ENCODE measurements at regions of chr3 and their contacts with region 1.

Region 1: GRCh38 chr3:72818092-72818773 is 30.0 kb downstream of the SHQ1 start:
- DNase-seq: no peak
- ATAC-seq: no peak
- H3K4me3 Mint-ChIP-seq: no peak overlapping the region
- H3K27ac Mint-ChIP-seq: no peak overlapping the region
- H3K4me1 Mint-ChIP-seq: peaks cover 14% of the 10 kb centered on the region
- H3K27me3 Mint-ChIP-seq: no peaks in the 10 kb centered on the region

Region 2: DNA sequence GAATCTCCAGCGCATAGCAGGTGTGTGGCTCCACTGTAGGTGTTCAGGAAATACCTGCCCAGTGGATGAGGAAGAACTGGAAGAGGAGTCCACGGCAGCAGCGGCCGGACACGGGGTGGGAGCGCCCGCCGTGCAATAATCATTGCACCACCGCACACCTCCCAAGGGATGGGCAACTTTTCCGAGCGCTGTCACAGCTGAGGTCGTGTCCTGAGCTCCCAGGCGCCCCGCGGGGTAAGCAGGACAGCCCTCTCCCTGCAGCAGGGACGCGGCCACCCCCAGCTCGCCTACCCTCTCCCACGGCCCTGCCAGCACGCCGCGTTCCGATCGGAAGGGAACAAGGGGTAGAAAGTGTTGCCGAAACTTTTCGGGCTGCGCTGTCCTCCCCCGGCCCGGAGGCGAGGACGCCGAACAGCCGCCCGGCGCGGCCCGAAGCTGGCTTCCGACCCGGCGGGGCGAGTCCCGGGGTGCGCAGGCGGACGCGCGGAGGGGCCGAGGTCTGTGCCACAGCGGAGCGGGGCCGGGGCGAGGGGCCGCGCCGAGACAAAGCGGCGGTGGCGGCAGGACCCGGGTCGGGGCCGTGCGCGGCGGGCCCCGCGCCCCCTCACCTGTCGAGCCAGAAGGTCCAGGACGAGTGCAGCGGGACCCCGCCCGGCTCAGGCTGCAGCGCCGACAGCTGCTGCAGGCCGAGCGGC is 1093.5 kb before region 1 on chr3:
- CTCF ChIA-PET with region 1: interaction called, 10 read pairs
- POLR2A ChIA-PET with region 1: no interaction called
- DNase-seq: peak; percentile 45
- ATAC-seq: peak; percentile 43
- H3K4me3 Mint-ChIP-seq: peak overlapping the region; percentile 94
- H3K27ac Mint-ChIP-seq: peak overlapping the region; percentile 92
- H3K4me1 Mint-ChIP-seq: peaks cover 59% of the 10 kb centered on the region
- H3K27me3 Mint-ChIP-seq: no peaks in the 10 kb centered on the region

Region 3: GRCh38 chr3:71930056-71930991 is 887.9 kb before region 1 on chr3:
- CTCF ChIA-PET with region 1: interaction called, 11 read pairs
- POLR2A ChIA-PET with region 1: no interaction called
- DNase-seq: no peak
- ATAC-seq: no peak
- H3K4me3 Mint-ChIP-seq: no peak overlapping the region
- H3K27ac Mint-ChIP-seq: no peak overlapping the region
- H3K4me1 Mint-ChIP-seq: no peaks in the 10 kb centered on the region
- H3K27me3 Mint-ChIP-seq: no peaks in the 10 kb centered on the region

Region 4: GRCh38 chr3:72665701-72666443 is 152.4 kb before region 1 on chr3:
- CTCF ChIA-PET with region 1: interaction called, 189 read pairs
- POLR2A ChIA-PET with region 1: interaction called, 4 read pairs
- DNase-seq: peak; percentile 67
- ATAC-seq: peak; percentile 53
- H3K4me3 Mint-ChIP-seq: no peak overlapping the region
- H3K27ac Mint-ChIP-seq: no peak overlapping the region
- H3K4me1 Mint-ChIP-seq: no peaks in the 10 kb centered on the region
- H3K27me3 Mint-ChIP-seq: no peaks in the 10 kb centered on the region

Region 5: GRCh38 chr3:72738752-72739530 is 79.3 kb before region 1 on chr3:
- CTCF ChIA-PET with region 1: interaction called, 27 read pairs
- POLR2A ChIA-PET with region 1: no interaction called
- DNase-seq: peak; percentile 71
- ATAC-seq: peak; percentile 94
- H3K4me3 Mint-ChIP-seq: peak overlapping the region; percentile 75
- H3K27ac Mint-ChIP-seq: peak overlapping the region; percentile 82
- H3K4me1 Mint-ChIP-seq: peaks cover 18% of the 10 kb centered on the region
- H3K27me3 Mint-ChIP-seq: no peaks in the 10 kb centered on the region

Region 6: DNA sequence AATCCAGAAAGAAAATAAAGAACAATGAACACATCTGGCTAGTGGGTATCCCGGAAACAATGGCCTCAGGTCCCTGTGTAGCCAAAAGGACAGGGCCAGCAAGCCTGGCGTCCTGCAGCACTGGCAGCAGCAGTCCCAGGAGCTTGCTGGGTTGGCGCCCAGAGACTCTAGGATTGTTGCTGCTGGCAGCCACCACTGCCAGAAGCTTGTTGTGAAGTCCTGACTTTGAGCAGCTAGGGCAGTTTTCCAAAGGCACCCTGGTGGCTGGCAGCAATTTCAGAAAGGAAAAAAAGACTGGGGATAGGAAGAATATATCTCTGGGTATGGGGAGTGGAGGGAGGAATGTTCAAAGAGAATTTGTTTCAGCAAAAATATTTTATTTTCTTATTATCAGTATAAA is 18.7 kb after region 1 on chr3:
- CTCF ChIA-PET with region 1: interaction called, 14 read pairs
- POLR2A ChIA-PET with region 1: no interaction called
- DNase-seq: no peak
- ATAC-seq: no peak
- H3K4me3 Mint-ChIP-seq: no peak overlapping the region
- H3K27ac Mint-ChIP-seq: no peak overlapping the region
- H3K4me1 Mint-ChIP-seq: no peaks in the 10 kb centered on the region
- H3K27me3 Mint-ChIP-seq: no peaks in the 10 kb centered on the region

Region 7: GRCh38 chr3:72862314-72863090 is 44.3 kb after region 1 on chr3:
- CTCF ChIA-PET with region 1: no interaction called
- POLR2A ChIA-PET with region 1: no interaction called
- DNase-seq: no peak
- ATAC-seq: no peak
- H3K4me3 Mint-ChIP-seq: no peak overlapping the region
- H3K27ac Mint-ChIP-seq: no peak overlapping the region
- H3K4me1 Mint-ChIP-seq: no peaks in the 10 kb centered on the region
- H3K27me3 Mint-ChIP-seq: peaks cover 7% of the 10 kb centered on the region

Region 8: GRCh38 chr3:73086071-73086494 is 267.9 kb after region 1 on chr3:
- CTCF ChIA-PET with region 1: interaction called, 10 read pairs
- POLR2A ChIA-PET with region 1: no interaction called
- DNase-seq: peak; percentile 60
- ATAC-seq: peak; percentile 69
- H3K4me3 Mint-ChIP-seq: no peak overlapping the region
- H3K27ac Mint-ChIP-seq: no peak overlapping the region
- H3K4me1 Mint-ChIP-seq: peaks cover 8% of the 10 kb centered on the region
- H3K27me3 Mint-ChIP-seq: peaks cover 5% of the 10 kb centered on the region

Measured in activated CD8-positive, alpha-beta T cell treated with anti-CD3 and anti-CD28 coated beads, Interleukin-2, amount 10 ng/mL, durations not matched to agents 7 days and 5 days (primary cell).